Naive thymus-derived CD4-positive, alpha-beta T cell (primary cell): ENCODE measurements at regions of chr10 and their contacts with region 1.

Region 1: GRCh38 chr10:25080880-25081581 is 64.6 kb downstream of the THNSL1 start:
- DNase-seq: peak; percentile 4 to 53 (median 42)
- ATAC-seq: peak; percentile 79
- H3K4me3 ChIP-seq: no peak overlapping the region
- H3K4me3 Mint-ChIP-seq: no peak overlapping the region
- H3K27ac ChIP-seq: no peak overlapping the region
- H3K27ac Mint-ChIP-seq: no peak overlapping the region
- H3K4me1 ChIP-seq: peaks cover 0 to 4% of the 10 kb centered on the region in 2 donors
- H3K4me1 Mint-ChIP-seq: peaks cover 0 to 8% (median 4%) of the 10 kb centered on the region in 7 donors
- H3K27me3 ChIP-seq: peaks cover 0 to 4% of the 10 kb centered on the region in 2 donors
- H3K27me3 Mint-ChIP-seq: peaks cover 0 to 23% (median 5%) of the 10 kb centered on the region in 5 donors

Region 2: GRCh38 chr10:24706479-24707118 is 374.4 kb before region 1 on chr10:
- CTCF ChIA-PET with region 1: no interaction called
- POLR2A ChIA-PET with region 1: no interaction called
- intact Hi-C with region 1: loop called in 1 of 2 experiments (anchors 5 kb)
- DNase-seq: peak in 4 of 9 donors; percentile 13 to 31 (median 24)
- ATAC-seq: peak; percentile 93
- H3K4me3 ChIP-seq: no peak overlapping the region
- H3K4me3 Mint-ChIP-seq: no peak overlapping the region
- H3K27ac ChIP-seq: no peak overlapping the region
- H3K27ac Mint-ChIP-seq: no peak overlapping the region
- H3K4me1 ChIP-seq: no peaks in the 10 kb centered on the region
- H3K4me1 Mint-ChIP-seq: peaks cover under 1 to 22% (median 3%) of the 10 kb centered on the region in 7 donors
- H3K27me3 ChIP-seq: no peaks in the 10 kb centered on the region
- H3K27me3 Mint-ChIP-seq: no peaks in the 10 kb centered on the region

Region 3: GRCh38 chr10:24908793-24909423 is 172.1 kb before region 1 on chr10:
- CTCF ChIA-PET with region 1: no interaction called
- POLR2A ChIA-PET with region 1: no interaction called
- intact Hi-C with region 1: no loop called
- DNase-seq: no peak
- ATAC-seq: no peak
- H3K4me3 ChIP-seq: no peak overlapping the region
- H3K4me3 Mint-ChIP-seq: no peak overlapping the region
- H3K27ac ChIP-seq: no peak overlapping the region
- H3K27ac Mint-ChIP-seq: peak overlapping the region in 1 of 9 donors; percentile 34
- H3K4me1 ChIP-seq: no peaks in the 10 kb centered on the region
- H3K4me1 Mint-ChIP-seq: peaks cover 6 to 18% (median 9%) of the 10 kb centered on the region in 7 donors
- H3K27me3 ChIP-seq: no peaks in the 10 kb centered on the region
- H3K27me3 Mint-ChIP-seq: no peaks in the 10 kb centered on the region

Region 4: DNA sequence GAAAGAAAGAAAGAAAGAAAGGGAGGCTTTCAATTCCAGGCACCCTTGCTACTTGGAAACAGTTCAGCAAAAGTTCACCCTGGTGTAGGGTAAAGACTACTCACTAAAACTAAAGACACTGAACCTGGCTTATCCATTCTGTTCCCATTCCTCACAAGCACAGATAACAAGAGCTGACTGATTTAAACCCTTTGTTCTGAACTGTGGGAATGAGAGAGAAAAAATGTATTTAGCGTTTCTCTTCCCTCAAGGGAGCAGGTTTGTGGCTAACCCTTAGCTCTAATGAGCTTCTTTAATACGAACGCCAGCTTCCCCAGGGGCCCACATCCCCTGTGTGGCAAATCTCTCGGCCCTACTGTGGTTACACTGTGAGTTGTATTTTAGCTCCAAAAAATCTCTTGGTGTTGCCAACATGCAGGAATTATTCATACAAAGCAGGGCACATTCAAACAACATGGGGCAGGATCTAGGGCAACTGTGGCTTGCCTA is 151.9 kb before region 1 on chr10:
- CTCF ChIA-PET with region 1: no interaction called
- POLR2A ChIA-PET with region 1: no interaction called
- intact Hi-C with region 1: no loop called
- DNase-seq: no peak
- ATAC-seq: no peak
- H3K4me3 ChIP-seq: no peak overlapping the region
- H3K4me3 Mint-ChIP-seq: peak overlapping the region in 2 of 10 donors; percentile 22
- H3K27ac ChIP-seq: no peak overlapping the region
- H3K27ac Mint-ChIP-seq: peak overlapping the region in 1 of 9 donors; percentile 11
- H3K4me1 ChIP-seq: peaks cover 0 to 13% of the 10 kb centered on the region in 2 donors
- H3K4me1 Mint-ChIP-seq: peaks cover 1 to 34% (median 11%) of the 10 kb centered on the region in 7 donors
- H3K27me3 ChIP-seq: no peaks in the 10 kb centered on the region
- H3K27me3 Mint-ChIP-seq: peaks cover 0 to 7% (median 0%) of the 10 kb centered on the region in 5 donors

Region 5: GRCh38 chr10:24952707-24953645 is 128.1 kb before region 1 on chr10:
- CTCF ChIA-PET with region 1: no interaction called
- POLR2A ChIA-PET with region 1: no interaction called
- intact Hi-C with region 1: loop called (anchors 1 to 5 kb)
- DNase-seq: peak; percentile 31 to 66 (median 55)
- ATAC-seq: peak; percentile 89
- H3K4me3 ChIP-seq: peak overlapping the region; percentile 55
- H3K4me3 Mint-ChIP-seq: peak overlapping the region; percentile 76 to 89 (median 86)
- H3K27ac ChIP-seq: peak overlapping the region; percentile 59
- H3K27ac Mint-ChIP-seq: peak overlapping the region; percentile 49 to 91 (median 83)
- H3K4me1 ChIP-seq: peaks cover 4 to 6% of the 10 kb centered on the region in 2 donors
- H3K4me1 Mint-ChIP-seq: peaks cover 7 to 30% (median 18%) of the 10 kb centered on the region in 7 donors
- H3K27me3 ChIP-seq: no peaks in the 10 kb centered on the region
- H3K27me3 Mint-ChIP-seq: no peaks in the 10 kb centered on the region